ENCODE measurements at regions of chr3 and their contacts with region 1.

Region 1: DNA sequence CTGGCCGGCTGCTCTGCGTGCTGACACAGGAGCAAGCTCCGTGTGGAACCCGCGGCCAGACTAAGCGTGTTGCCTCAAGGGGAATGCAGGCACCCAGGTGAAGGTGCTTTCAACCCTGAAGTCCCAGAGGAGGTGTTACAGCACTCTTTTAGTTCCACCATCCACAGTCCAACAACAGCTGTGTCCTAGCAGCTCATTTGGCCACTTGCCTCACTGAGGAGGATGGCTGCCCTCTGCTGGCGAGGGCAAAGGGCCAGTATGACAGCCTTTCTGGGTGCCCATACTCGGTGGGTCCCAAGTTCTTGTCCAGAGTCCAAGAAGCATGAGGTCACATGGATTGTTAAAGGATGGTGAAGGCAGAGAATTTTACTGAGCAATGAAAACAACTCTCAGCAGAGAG is 87.8 kb downstream of the C3orf85 start:
- DNase-seq: peak; percentile 67
- H3K4me3 Mint-ChIP-seq: no peak overlapping the region
- H3K27ac Mint-ChIP-seq: no peak overlapping the region
- H3K4me1 Mint-ChIP-seq: peaks cover 9% of the 10 kb centered on the region
- H3K27me3 Mint-ChIP-seq: no peaks in the 10 kb centered on the region
- CTCF ChIP-seq: peak; percentile 68

Region 2: GRCh38 chr3:109023656-109024254 is 200.6 kb before region 1 on chr3:
- CTCF ChIA-PET with region 1: interaction called, 40 read pairs
- intact Hi-C with region 1: loop called (anchors 10 kb)
- DNase-seq: peak; percentile 49
- H3K4me3 Mint-ChIP-seq: no peak overlapping the region
- H3K27ac Mint-ChIP-seq: no peak overlapping the region
- H3K4me1 Mint-ChIP-seq: no peaks in the 10 kb centered on the region
- H3K27me3 Mint-ChIP-seq: peaks cover 8% of the 10 kb centered on the region
- CTCF ChIP-seq: no peak

Region 3: DNA sequence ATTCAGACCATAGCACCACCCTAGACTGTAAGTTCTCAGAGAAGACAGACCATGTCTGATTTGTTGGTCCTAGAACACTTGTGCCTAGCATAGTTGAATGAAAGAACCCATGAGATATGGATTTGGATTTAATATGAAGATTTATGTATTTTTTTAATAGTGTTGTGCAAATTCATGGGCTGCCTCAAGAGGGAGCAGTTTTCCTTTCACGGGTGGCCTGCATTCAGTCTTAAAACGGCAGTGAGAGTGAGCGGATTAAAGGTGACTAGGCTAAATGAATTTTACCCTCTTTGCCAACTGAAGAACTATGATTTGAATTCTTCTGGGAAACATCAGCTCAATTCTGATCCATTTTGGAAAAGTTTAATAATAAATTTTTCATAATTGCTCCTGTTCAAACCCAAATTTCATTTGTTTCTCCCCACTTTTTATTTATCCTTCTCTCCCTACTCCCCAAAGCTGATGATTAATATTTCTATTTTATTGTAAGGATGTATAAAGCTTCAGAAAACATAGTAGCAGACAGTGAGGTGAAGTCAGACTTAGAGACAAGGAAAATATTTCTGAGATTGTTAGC is 173.7 kb before region 1 on chr3:
- CTCF ChIA-PET with region 1: interaction called, 3 read pairs
- intact Hi-C with region 1: loop called (anchors 1 kb)
- DNase-seq: peak; percentile 41
- H3K4me3 Mint-ChIP-seq: no peak overlapping the region
- H3K27ac Mint-ChIP-seq: no peak overlapping the region
- H3K4me1 Mint-ChIP-seq: peaks cover 7% of the 10 kb centered on the region
- H3K27me3 Mint-ChIP-seq: no peaks in the 10 kb centered on the region
- CTCF ChIP-seq: peak; percentile 51

Region 4: GRCh38 chr3:109098079-109098644 is 126.2 kb before region 1 on chr3:
- CTCF ChIA-PET with region 1: no interaction called
- intact Hi-C with region 1: loop called (anchors 10 kb)
- DNase-seq: peak; percentile 60
- H3K4me3 Mint-ChIP-seq: no peak overlapping the region
- H3K27ac Mint-ChIP-seq: no peak overlapping the region
- H3K4me1 Mint-ChIP-seq: no peaks in the 10 kb centered on the region
- H3K27me3 Mint-ChIP-seq: no peaks in the 10 kb centered on the region
- CTCF ChIP-seq: peak; percentile 36

Measured in Calu3 (cell line).